ENCODE measurements at regions of chr20 and their contacts with region 1.

Region 1: DNA sequence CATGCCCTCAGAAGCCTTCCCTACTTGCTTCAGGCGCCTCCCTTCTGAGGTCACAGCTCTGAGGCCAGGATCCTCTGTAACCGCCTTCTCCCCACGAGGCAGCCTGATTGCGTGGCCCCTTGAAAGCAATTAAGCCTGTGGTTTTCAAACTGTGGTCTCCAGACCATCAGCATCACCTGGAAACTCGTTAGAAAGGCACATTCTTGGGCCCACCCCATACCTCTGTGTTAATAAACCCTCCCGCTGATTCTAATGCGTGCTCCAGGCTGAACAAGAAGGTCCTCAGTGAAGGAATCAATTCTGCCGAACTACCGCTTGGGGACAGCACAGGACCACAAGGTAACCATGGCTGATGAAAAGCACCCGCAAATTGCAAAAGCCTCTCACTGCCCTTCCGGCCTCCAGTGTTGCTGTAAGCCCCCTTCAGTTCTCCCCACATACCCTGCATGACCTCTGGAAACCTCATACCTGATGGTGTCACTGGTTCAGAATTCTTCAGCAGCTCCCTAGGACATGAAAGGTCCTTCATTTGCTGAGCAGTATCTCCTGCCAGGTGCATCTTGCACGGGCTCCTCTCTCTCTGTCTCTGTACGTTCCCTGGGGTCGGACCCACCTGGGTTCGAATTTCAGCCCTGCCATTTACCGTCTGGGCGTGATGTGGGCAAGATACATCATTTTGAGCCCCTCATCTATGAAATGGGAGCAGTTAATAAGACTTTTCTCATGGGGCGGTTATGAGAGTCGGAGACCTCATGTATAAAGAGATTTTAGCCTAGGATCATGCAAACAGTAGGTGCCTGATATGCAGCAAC is 93.3 kb upstream of the RNF24 start:
- DNase-seq: peak; percentile 73 to 74
- H3K4me3 ChIP-seq: no peak overlapping the region
- H3K27ac ChIP-seq: no peak overlapping the region
- H3K4me1 ChIP-seq: peaks cover 0 to 6% (median 4%) of the 10 kb centered on the region in 4 experiments; a peak in 3 of 7 replicates
- H3K27me3 ChIP-seq: no peaks in the 10 kb centered on the region; a peak in 1 of 7 replicates
- CTCF ChIP-seq: peak; percentile 83 to 99 (median 97)
- EP300 ChIP-seq: peak in 1 of 2 experiments; percentile 66; a peak in 1 of 3 replicates
- POLR2A ChIP-seq: peak in 1 of 2 experiments; percentile 36; a peak in 1 of 3 replicates
- RAD21 ChIP-seq: peak; percentile 99 to 100

Region 2: GRCh38 chr20:4091490-4092479 is 16.9 kb before region 1 on chr20:
- CTCF ChIA-PET with region 1: interaction called, 22 read pairs
- POLR2A ChIA-PET with region 1: interaction called, 3 read pairs
- DNase-seq: peak in 1 of 2 experiments; percentile 91
- H3K4me3 ChIP-seq: no peak overlapping the region
- H3K27ac ChIP-seq: no peak overlapping the region
- H3K4me1 ChIP-seq: peaks cover 0 to 3% (median 2%) of the 10 kb centered on the region in 4 experiments; a peak in 2 of 7 replicates
- H3K27me3 ChIP-seq: no peaks in the 10 kb centered on the region
- CTCF ChIP-seq: peak; percentile 83 to 88 (median 86)
- EP300 ChIP-seq: no peak
- POLR2A ChIP-seq: no peak
- RAD21 ChIP-seq: peak; percentile 66 to 77

Region 3: GRCh38 chr20:4119854-4120209 is 11.1 kb after region 1 on chr20:
- CTCF ChIA-PET with region 1: interaction called, 51 read pairs
- POLR2A ChIA-PET with region 1: no interaction called
- DNase-seq: no peak
- H3K4me3 ChIP-seq: no peak overlapping the region
- H3K27ac ChIP-seq: no peak overlapping the region
- H3K4me1 ChIP-seq: no peaks in the 10 kb centered on the region
- H3K27me3 ChIP-seq: no peaks in the 10 kb centered on the region
- CTCF ChIP-seq: no peak
- EP300 ChIP-seq: no peak
- POLR2A ChIP-seq: no peak
- RAD21 ChIP-seq: no peak

Region 4: GRCh38 chr20:4167261-4168021 is 58.7 kb after region 1 on chr20:
- CTCF ChIA-PET with region 1: interaction called, 18 read pairs
- POLR2A ChIA-PET with region 1: interaction called, 3 read pairs
- DNase-seq: peak in 1 of 2 experiments; percentile 60
- H3K4me3 ChIP-seq: peak overlapping the region in 2 of 4 experiments; percentile 5 to 11; a peak in 3 of 8 replicates
- H3K27ac ChIP-seq: no peak overlapping the region; the same call in 1 of the 2 replicates
- H3K4me1 ChIP-seq: peaks cover 5 to 36% (median 29%) of the 10 kb centered on the region in 4 experiments
- H3K27me3 ChIP-seq: peaks cover 0 to 3% (median 0%) of the 10 kb centered on the region in 4 experiments; a peak in 2 of 7 replicates
- CTCF ChIP-seq: no peak
- EP300 ChIP-seq: no peak
- POLR2A ChIP-seq: 0 out of 3 replicates have a peak, but pooled peaks of 1 of the 2 experiments have one; percentile 18
- RAD21 ChIP-seq: no peak

Region 5: GRCh38 chr20:4180356-4180755 is 71.7 kb after region 1 on chr20:
- CTCF ChIA-PET with region 1: interaction called, 44 read pairs
- POLR2A ChIA-PET with region 1: interaction called, 3 read pairs
- DNase-seq: no peak
- H3K4me3 ChIP-seq: no peak overlapping the region
- H3K27ac ChIP-seq: no peak overlapping the region
- H3K4me1 ChIP-seq: no peaks in the 10 kb centered on the region
- H3K27me3 ChIP-seq: no peaks in the 10 kb centered on the region
- CTCF ChIP-seq: no peak
- EP300 ChIP-seq: no peak
- POLR2A ChIP-seq: no peak
- RAD21 ChIP-seq: no peak

Region 6: GRCh38 chr20:4195499-4195898 is 86.8 kb after region 1 on chr20:
- CTCF ChIA-PET with region 1: interaction called, 57 read pairs
- POLR2A ChIA-PET with region 1: interaction called, 5 read pairs
- DNase-seq: peak; percentile 19 to 77
- H3K4me3 ChIP-seq: no peak overlapping the region
- H3K27ac ChIP-seq: no peak overlapping the region
- H3K4me1 ChIP-seq: no peaks in the 10 kb centered on the region; a peak in 1 of 7 replicates
- H3K27me3 ChIP-seq: no peaks in the 10 kb centered on the region
- CTCF ChIP-seq: peak; percentile 78 to 86 (median 79)
- EP300 ChIP-seq: no peak
- POLR2A ChIP-seq: no peak
- RAD21 ChIP-seq: peak; percentile 87 to 88

Measured in H1 (cell line).